PC-9 (cell line): ENCODE measurements at regions of chr2 and their contacts with region 1.

Region 1: GRCh38 chr2:85538486-85539360 is at the start of gene MAT2A:
- DNase-seq: peak; percentile 81 to 91
- H3K4me3 ChIP-seq: peak within 1 kb of the TSS; percentile 100
- H3K27ac ChIP-seq: peak within 1 kb of the TSS; percentile 97
- H3K4me1 ChIP-seq: peaks cover 38% of the 10 kb centered on the region
- H3K27me3 ChIP-seq: no peaks in the 10 kb centered on the region
- CTCF ChIP-seq: peak; percentile 69
- total RNA-seq, gene MAT2A: 169 and 206 TPM in 2 replicates

Region 2: GRCh38 chr2:85327822-85328617 is 210.7 kb before region 1 on chr2 and contains the start of gene TGOLN2:
- CTCF ChIA-PET with region 1: no interaction called
- POLR2A ChIA-PET with region 1: interaction called, 39 read pairs
- intact Hi-C with region 1: no loop called
- DNase-seq: peak; percentile 75 to 85
- H3K4me3 ChIP-seq: peak within 1 kb of the TSS; percentile 93
- H3K27ac ChIP-seq: peak within 1 kb of the TSS; percentile 68
- H3K4me1 ChIP-seq: peaks cover 30% of the 10 kb centered on the region
- H3K27me3 ChIP-seq: no peaks in the 10 kb centered on the region
- CTCF ChIP-seq: no peak; the same call in 1 of the 2 replicates
- total RNA-seq, gene TGOLN2: 86.1 and 87.2 TPM in 2 replicates

Region 3: DNA sequence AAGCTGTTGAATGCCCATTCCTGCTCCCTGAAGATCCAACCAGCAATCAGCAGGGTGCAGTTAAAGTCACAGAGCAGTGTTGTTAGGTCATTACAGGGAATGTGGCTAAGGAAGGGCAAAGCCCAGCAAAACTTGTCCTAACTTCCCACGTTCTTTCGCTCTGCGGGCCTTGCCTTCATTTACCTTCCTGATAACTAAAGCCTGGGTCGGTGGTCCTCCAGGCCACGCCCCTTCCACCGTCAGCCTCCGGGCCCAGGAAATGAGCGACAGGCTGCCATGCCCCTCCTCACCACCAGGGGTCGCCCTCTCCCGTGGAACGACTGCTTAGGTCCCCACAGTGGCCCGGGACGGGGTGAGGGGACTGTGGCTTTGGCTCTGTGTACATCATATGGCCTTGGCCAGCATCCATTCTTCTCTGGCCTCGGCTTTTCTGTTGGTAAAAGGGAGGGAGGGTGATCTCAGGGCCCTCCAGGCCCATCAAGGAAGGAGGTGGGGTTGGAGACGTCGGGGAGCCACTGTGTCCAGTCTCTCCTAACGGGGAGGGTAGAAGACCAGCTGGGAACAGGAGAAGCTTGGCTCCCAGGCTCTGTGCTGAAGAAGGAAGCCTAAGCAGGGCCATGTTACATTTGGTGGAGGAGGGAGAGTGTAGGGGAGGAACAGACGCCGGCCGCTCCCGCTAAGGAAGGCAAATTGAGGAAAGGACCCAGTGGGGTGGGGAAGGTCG is 118.0 kb before region 1 on chr2:
- CTCF ChIA-PET with region 1: no interaction called
- POLR2A ChIA-PET with region 1: interaction called, 4 read pairs
- intact Hi-C with region 1: loop called (anchors 1 kb)
- DNase-seq: peak; percentile 57 to 82
- H3K4me3 ChIP-seq: no peak overlapping the region; the same call in 1 of the 2 replicates
- H3K27ac ChIP-seq: peak overlapping the region; percentile 65
- H3K4me1 ChIP-seq: peaks cover 46% of the 10 kb centered on the region
- H3K27me3 ChIP-seq: no peaks in the 10 kb centered on the region
- CTCF ChIP-seq: peak; percentile 100

Region 4: DNA sequence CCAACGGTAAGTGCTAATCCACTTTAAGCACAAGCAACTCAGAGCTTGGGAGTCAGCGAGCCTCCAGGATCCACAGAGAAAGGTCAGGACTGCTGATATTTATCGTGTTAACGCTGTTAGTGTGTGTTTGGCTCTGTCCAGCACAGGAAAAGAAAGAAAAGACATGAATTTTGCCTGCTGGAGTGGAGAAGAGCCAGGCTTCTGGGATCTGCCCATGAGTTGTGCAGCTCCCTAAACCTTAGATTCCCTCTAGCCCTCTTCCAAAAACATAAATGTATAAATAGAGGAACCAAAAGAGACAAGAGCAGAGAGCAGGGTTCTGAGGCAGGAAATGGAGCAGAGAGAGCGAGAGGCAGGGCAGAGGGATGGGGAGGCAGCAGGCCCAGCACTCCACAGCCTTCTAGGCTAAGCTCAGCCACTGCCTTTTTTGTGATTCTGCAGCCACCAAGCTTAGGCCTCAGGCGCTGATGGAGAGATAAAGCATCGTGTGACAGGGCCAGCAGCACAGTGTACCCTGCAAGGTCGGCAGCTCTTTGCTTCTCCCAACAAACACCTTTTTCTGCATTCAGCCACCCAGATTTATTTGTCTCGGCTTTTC is 14.3 kb before region 1 on chr2:
- CTCF ChIA-PET with region 1: no interaction called
- POLR2A ChIA-PET with region 1: interaction called, 12 read pairs
- intact Hi-C with region 1: no loop called
- DNase-seq: peak; percentile 69
- H3K4me3 ChIP-seq: no peak overlapping the region
- H3K27ac ChIP-seq: no peak overlapping the region
- H3K4me1 ChIP-seq: peaks cover 17% of the 10 kb centered on the region
- H3K27me3 ChIP-seq: no peaks in the 10 kb centered on the region
- CTCF ChIP-seq: no peak